ENCODE measurements at regions of chr2 and their contacts with region 1.

Region 1: DNA sequence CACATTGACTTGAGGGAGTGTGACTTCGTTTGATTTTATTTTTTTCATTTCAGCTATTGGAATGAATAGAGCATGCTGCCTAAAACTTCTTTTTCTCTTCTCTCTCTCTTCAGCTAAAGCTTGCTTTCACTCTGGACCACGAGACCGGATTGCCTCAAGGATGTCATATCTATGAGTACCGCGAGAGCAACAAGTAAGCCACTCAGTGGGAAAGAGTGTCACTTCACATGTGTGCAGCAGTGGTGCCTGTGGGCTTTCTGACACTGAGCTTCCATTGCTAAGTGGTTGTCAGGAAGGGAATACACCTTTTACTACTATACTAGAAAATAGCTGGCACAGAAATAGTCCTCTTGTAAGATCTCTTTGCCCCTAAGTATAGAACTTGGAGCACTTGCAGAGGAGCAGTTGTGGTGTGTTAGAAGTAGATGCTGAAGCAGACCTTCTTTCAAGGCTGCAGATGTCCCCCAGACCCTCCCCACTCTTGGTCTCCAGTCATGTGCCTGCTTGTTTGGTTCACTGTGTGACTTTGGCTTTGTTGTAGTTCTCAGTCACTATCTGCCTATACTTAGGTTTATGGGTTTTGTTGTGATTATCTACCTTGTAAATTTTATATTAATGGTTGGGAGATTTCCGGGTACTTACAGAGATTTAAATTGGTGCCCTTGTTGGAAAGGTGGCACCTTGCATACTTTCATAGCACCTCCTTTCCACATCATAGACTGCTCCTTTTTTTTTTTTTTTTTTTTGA is 78.5 kb upstream of the ALPP start:
- DNase-seq: no peak
- H3K27ac ChIP-seq: no peak overlapping the region
- CTCF ChIP-seq: no peak

Region 2: DNA sequence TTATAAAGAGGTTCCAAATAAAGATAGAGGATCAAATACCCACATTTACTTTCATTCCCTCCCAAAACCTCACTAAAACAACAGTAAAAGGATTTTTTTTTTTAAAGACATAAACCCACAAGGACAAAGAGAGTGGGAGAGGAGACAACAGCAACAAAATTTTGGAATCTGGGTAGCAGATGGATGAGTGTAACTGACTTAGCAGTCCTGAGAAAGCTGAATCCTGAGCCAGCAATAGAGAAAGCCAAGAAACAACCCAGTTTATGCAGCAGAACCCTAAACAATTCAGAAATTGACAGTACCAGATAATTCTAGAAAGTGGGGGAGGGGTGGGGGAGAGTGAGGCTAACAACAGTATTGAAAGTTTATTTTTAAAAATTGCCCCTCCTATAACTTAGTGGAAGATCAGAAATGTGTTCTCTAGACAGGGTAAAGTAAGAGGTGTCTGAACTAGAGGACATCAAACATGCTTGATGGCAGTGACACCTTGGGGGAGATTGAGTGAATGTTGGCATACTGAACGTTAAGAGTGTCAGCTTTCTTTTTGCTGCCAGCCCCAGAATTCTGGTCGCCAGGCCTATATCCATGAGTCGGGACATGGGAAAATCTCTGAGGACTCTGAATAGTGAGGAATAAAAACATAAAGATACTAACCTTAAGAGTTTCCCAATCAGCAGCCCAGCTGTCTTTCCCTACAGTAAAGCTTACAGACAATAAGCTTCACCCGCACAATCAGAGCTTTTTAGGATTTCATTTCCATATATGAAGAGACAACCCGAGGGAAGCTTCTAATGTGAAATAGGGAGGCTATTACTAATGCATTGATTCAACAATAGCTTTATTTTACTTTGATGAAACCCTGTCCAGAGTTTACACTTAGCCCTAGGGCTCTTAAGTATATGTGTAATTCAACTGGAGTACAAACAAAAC is 49.6 kb before region 1 on chr2:
- CTCF ChIA-PET with region 1: no interaction called
- POLR2A ChIA-PET with region 1: no interaction called
- DNase-seq: no peak
- H3K27ac ChIP-seq: no peak overlapping the region
- CTCF ChIP-seq: no peak

Region 3: GRCh38 chr2:232288489-232289030 is 11.5 kb before region 1 on chr2:
- CTCF ChIA-PET with region 1: interaction called, 12 read pairs
- POLR2A ChIA-PET with region 1: no interaction called
- DNase-seq: no peak
- H3K27ac ChIP-seq: no peak overlapping the region
- CTCF ChIP-seq: no peak